ENCODE measurements at regions of chr3 and their contacts with region 1.

Region 1: GRCh38 chr3:12719984-12720898 is 38.8 kb downstream of the TMEM40 start:
- DNase-seq: peak; percentile 80
- ATAC-seq: peak; percentile 74
- H3K4me3 Mint-ChIP-seq: peak overlapping the region; percentile 36
- H3K27ac Mint-ChIP-seq: no peak overlapping the region
- H3K4me1 Mint-ChIP-seq: peaks cover 9% of the 10 kb centered on the region
- H3K27me3 Mint-ChIP-seq: no peaks in the 10 kb centered on the region

Region 2: DNA sequence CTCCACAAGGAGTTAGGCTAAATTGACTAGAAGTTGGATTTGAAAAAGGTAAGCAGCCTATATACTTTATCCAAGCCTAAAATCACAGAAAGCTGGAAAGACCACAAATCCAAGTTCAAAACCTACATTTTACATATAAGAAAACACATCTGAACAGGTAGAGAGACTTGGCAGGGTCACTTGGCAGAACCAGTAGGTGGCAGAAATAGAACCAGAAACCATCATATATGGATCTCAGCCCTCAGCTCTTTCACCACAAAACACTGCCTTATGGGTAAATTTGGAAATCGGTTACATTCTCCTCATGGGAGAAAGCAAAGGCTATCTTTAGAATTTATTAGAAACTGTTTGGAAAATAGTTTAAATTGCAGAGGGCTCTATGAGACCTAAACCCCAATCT is 119.2 kb before region 1 on chr3:
- CTCF ChIA-PET with region 1: interaction called, 3 read pairs
- POLR2A ChIA-PET with region 1: no interaction called
- intact Hi-C with region 1: loop called in 1 of 2 experiments (anchors 2 kb)
- DNase-seq: no peak
- ATAC-seq: no peak
- H3K4me3 Mint-ChIP-seq: no peak overlapping the region
- H3K27ac Mint-ChIP-seq: no peak overlapping the region
- H3K4me1 Mint-ChIP-seq: peaks cover 3% of the 10 kb centered on the region
- H3K27me3 Mint-ChIP-seq: no peaks in the 10 kb centered on the region

Region 3: DNA sequence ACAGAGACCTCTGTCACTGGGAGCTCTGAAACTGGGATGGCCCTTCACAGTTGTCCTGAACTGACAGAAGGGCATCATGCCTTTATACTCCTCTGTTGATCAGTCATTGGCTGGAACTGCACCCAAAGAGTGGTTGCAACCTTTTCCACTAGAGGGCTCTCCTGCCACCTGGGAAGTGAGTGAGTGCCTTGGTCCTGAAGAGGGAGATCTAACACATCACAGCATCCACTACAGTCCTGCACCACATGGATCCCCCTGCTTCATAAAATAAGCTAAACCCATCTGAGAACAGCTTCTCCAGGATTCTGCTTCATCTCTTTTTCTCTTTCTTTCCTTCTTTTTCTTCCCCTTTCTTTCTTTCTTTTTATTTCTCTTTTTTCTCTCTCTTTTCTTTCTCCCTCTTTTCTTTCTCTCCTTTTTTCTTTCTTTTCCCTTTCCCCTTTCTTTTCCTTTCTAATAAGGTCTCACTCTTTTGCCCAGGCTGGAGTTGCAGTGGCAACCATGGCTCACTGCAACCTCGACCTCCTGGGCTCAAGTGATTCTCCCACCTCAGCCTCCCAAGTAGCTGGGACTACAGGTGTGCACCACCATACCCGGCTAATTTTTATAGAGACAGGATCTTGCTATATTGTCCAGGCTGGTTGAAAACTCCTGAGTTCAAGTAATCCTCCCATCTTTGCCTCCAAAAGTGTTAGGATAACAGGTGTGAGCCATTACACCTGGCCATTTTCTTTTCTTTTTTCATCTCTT is 13.6 kb before region 1 on chr3:
- CTCF ChIA-PET with region 1: interaction called, 13 read pairs
- POLR2A ChIA-PET with region 1: no interaction called
- intact Hi-C with region 1: no loop called
- DNase-seq: peak; percentile 79
- ATAC-seq: peak; percentile 100
- H3K4me3 Mint-ChIP-seq: no peak overlapping the region
- H3K27ac Mint-ChIP-seq: no peak overlapping the region
- H3K4me1 Mint-ChIP-seq: no peaks in the 10 kb centered on the region
- H3K27me3 Mint-ChIP-seq: no peaks in the 10 kb centered on the region

Region 4: GRCh38 chr3:12822725-12823373 is 102.6 kb after region 1 on chr3:
- CTCF ChIA-PET with region 1: no interaction called
- POLR2A ChIA-PET with region 1: no interaction called
- intact Hi-C with region 1: no loop called
- DNase-seq: no peak
- ATAC-seq: no peak
- H3K4me3 Mint-ChIP-seq: no peak overlapping the region
- H3K27ac Mint-ChIP-seq: peak overlapping the region; percentile 13
- H3K4me1 Mint-ChIP-seq: no peaks in the 10 kb centered on the region
- H3K27me3 Mint-ChIP-seq: no peaks in the 10 kb centered on the region